Tibial artery (tissue), 4 donors: ENCODE measurements at regions of chr17 and their contacts with region 1.

Region 1: GRCh38 chr17:57114085-57114673 is 29.1 kb downstream of the AKAP1 start:
- DNase-seq: peak in 1 of 2 donors; percentile 39
- H3K4me3 ChIP-seq: no peak overlapping the region
- H3K27ac ChIP-seq: peak overlapping the region; percentile 20 to 32
- H3K4me1 ChIP-seq: peaks cover 0 to 36% (median 28%) of the 10 kb centered on the region in 4 donors
- H3K27me3 ChIP-seq: no peaks in the 10 kb centered on the region
- CTCF ChIP-seq: peak; percentile 69 to 81

Region 2: DNA sequence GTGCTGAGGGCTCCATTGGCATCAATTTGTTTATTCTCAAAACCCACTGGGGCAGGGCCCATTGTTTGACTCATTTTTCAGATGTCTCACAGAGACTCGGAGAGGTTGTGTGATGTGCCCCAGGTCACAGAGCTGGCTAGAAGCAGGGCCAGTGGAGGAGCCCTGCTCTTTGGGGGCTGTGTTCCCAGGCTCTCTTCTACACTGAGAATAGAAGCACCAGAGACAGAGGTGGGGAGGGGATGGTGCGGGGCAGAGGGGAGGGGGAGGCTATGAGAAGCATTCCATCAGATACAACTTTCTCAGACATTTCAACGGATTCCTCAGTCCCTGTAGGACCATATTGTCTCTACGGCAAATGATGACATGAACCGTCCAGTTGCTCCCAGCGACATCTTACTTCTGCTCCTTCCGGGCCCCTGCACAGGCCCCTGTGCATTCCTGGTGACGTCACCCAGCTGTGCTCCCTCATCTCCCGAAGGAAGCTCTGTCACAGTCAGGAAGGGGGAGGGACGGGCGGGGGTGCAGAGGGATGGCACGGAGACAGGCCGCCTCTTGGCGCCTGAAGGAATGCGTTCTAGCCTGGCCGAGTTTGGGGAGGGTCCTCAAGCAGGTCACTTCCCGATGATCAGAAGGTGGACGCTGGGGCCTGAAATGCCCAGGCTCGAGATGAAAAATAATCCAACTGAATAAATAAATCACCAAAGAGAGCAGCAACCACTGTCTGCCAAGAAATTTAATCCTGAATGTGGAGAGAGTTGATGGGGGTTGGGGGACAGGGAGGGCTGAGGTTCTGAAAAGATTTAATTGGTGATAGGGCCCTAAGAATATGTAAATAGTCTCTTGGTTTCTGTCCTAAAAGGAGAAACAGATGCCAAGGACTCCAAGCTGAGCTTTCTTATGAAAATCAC is 406.6 kb before region 1 on chr17:
- intact Hi-C with region 1: no loop called
- DNase-seq: no peak
- H3K4me3 ChIP-seq: no peak overlapping the region
- H3K27ac ChIP-seq: no peak overlapping the region
- H3K4me1 ChIP-seq: no peaks in the 10 kb centered on the region
- H3K27me3 ChIP-seq: peaks cover 0 to 15% of the 10 kb centered on the region in 2 donors
- CTCF ChIP-seq: no peak

Region 3: DNA sequence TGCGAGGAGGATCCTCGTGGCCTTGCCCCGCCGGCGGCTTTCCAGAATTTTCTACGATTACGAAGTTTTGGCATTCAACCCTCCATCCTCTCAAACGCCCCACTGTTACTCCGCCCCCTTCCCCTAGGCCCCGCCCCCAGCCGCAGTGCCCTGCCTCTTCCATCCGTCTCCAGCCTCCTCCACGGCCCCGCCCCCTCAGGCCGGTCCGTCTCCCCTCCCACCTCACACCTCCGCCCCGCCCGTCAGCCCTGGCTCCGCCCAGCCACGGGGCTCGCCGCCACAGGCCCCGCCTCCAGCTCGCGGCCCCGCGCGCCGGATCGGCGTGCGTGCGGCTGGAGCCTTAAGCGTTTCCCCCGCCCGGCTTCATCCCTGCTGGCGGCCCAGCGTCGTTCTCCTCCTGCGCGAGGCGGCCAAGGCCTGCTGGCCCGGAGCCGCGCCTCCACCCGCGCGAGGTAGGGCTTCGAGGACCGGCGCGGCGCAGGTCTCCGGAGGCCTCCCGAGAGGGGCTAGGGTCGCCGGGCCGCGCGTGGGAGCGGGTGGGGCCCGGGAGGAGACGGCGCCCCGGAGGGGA is 280.3 kb before region 1 on chr17 and contains the starts of genes C17orf67 and DGKE:
- intact Hi-C with region 1: loop called (anchors 10 kb)
- DNase-seq: peak; percentile 99
- H3K4me3 ChIP-seq: peak within 1 kb of the TSS; percentile 78 to 86
- H3K27ac ChIP-seq: peak within 1 kb of the TSS; percentile 73 to 79
- H3K4me1 ChIP-seq: peaks cover 7 to 35% (median 16%) of the 10 kb centered on the region in 4 donors
- H3K27me3 ChIP-seq: no peaks in the 10 kb centered on the region
- CTCF ChIP-seq: no peak

Region 4: GRCh38 chr17:56867948-56868376 is 246.2 kb before region 1 on chr17:
- intact Hi-C with region 1: no loop called
- DNase-seq: no peak
- H3K4me3 ChIP-seq: no peak overlapping the region
- H3K27ac ChIP-seq: no peak overlapping the region
- H3K4me1 ChIP-seq: no peaks in the 10 kb centered on the region
- H3K27me3 ChIP-seq: no peaks in the 10 kb centered on the region
- CTCF ChIP-seq: no peak

Region 5: DNA sequence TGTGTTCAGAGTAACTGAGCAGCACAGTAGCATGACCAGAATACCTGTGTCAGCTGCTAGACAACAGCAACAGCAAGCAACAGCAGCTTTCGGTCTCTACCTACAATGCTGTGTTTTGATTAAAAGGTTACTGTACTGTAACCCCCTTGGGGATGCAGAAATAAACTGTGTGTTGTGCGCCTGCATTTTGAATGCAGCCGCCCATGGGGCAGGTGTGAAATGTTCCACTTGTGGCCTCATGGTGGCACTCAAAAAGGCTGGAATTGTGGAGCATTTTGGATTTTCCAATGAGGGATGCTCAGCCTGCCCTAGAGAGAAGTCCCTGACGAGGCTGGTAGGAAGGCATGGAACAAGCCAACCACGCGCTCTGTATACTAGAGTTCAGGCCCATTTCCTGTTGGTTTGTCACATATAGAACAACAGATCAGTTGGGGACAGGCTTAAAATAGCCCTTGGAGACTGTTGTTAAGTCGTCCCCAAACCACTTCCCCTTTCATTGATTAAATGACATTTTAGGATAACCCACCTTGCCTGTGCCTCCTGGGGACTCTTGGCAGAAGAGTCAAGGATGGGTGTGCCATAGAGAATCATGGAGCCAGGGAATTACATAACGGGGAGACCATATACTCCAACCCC is 109.1 kb before region 1 on chr17:
- intact Hi-C with region 1: loop called (anchors 2 kb)
- DNase-seq: no peak
- H3K4me3 ChIP-seq: no peak overlapping the region
- H3K27ac ChIP-seq: no peak overlapping the region
- H3K4me1 ChIP-seq: no peaks in the 10 kb centered on the region
- H3K27me3 ChIP-seq: no peaks in the 10 kb centered on the region
- CTCF ChIP-seq: peak; percentile 46 to 51

Region 6: DNA sequence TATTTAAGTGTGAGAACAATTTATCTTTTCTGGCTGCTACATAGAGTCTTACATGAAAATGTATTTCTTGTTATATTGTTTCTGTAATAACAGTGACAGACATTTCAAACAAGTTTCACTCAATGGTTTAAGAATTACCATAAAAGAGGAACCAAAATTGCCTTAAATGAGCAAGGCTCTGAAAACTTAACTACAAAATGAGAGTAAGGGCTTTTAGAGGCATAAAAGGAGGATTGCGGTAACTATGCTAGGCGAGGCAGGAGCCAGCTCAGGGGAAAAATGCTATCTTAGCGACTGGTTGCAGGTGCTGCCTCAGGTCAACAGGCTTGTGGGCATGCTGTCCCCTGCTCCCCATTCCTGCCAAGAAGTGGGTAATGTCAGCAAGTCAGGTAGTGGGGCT is 60.4 kb after region 1 on chr17:
- intact Hi-C with region 1: no loop called
- DNase-seq: no peak
- H3K4me3 ChIP-seq: no peak overlapping the region
- H3K27ac ChIP-seq: no peak overlapping the region
- H3K4me1 ChIP-seq: no peaks in the 10 kb centered on the region
- H3K27me3 ChIP-seq: peaks cover 0 to 5% of the 10 kb centered on the region in 2 donors
- CTCF ChIP-seq: no peak